ENCODE measurements at regions of chr15 and their contacts with region 1.

Region 1: GRCh38 chr15:31786360-31786759 is 244.0 kb upstream of the CHRNA7 start:
- H3K4me3 Mint-ChIP-seq: no peak overlapping the region
- H3K27ac Mint-ChIP-seq: no peak overlapping the region
- H3K4me1 Mint-ChIP-seq: no peaks in the 10 kb centered on the region
- H3K27me3 Mint-ChIP-seq: peaks cover 2% of the 10 kb centered on the region

Region 2: DNA sequence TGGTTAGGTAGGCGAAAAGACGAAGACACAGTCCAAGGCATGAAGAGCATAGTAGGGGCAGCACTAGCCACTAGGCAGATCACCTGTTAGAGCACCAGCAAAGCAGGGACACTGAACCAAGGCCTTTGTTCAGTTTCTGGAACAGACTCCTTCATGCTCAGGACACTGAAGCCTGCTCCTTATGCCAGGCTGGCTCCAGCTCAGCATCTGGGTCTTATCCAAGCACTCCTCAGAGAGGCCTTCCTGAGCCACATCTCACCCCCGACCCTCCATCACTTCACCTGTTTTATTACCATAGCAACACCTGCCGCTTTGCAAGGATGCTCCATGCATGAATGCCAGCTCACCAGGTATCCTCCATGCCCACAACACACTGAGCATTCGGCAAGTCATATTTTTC is 37.7 kb after region 1 on chr15:
- intact Hi-C with region 1: loop called (anchors 5 kb)
- H3K4me3 Mint-ChIP-seq: no peak overlapping the region
- H3K27ac Mint-ChIP-seq: no peak overlapping the region
- H3K4me1 Mint-ChIP-seq: no peaks in the 10 kb centered on the region
- H3K27me3 Mint-ChIP-seq: no peaks in the 10 kb centered on the region

Measured in dendritic cell treated with granulocyte-macrophage colony-stimulating factor and Interleukin-4, amounts not matched to agents 40 ng/mL and 50 ng/mL, for 4 days (primary cell).